AG04450 (cell line): ENCODE measurements at regions of chr1 and their contacts with region 1.

Region 1: GRCh38 chr1:85276215-85276977 is at the start of gene BCL10:
- DNase-seq: peak; percentile 94
- H3K4me3 ChIP-seq: peak within 1 kb of the TSS; percentile 98
- H3K27ac ChIP-seq: peak within 1 kb of the TSS; percentile 92
- H3K27me3 ChIP-seq: no peaks in the 10 kb centered on the region
- CTCF ChIP-seq: no peak
- polyA plus RNA-seq, gene BCL10: 17.2 and 19.4 TPM in 2 replicates

Region 2: DNA sequence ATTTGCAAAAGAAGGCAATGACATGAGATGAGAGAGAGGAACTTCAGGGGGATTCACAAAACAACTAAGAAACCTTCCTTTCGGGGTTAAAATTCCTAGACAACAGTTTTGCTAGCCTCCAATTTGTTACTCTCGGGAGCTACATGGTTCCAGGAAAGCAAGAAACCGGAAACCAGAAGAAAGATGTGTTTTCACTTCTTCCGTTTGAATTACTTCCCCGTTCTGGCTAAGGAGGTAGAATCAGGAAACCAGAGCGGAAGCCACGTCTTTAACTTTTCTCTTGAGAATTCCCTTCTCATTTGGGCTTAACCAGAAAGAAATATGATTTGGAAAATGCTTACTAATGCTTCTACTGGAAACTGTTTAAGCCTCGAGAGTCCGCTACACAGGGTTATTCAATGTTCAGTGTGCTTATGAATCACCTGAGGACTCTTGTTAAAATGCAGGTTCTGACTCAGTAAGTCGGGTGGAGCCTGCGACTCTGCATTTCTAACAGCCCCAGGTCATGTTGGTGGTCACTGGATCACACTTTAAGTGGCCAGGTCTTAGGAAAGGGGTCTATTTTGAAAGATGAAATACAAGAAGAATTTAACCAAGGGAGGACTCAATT is 184.6 kb before region 1 on chr1:
- CTCF ChIA-PET with region 1: no interaction called
- POLR2A ChIA-PET with region 1: no interaction called
- DNase-seq: no peak
- H3K4me3 ChIP-seq: no peak overlapping the region
- H3K27ac ChIP-seq: no peak overlapping the region
- H3K27me3 ChIP-seq: peaks cover 2% of the 10 kb centered on the region
- CTCF ChIP-seq: no peak

Region 3: DNA sequence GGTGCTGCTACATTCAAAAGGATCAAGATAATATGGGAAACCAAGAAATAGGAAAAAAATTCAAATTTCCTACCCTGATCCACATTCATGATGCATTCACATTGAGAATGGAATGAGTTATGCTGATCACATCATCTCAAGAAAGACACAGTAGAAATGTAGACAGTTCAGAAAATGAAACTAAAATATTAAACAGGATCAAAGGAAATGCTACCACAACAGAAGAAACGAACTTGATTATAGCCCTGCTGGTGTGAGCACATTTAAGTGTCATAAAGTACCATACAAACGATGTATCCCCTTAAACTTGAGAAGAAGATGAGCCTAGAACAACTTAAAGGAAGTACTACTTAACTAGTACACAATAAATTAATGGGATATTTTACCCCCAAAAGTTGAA is 96.9 kb before region 1 on chr1:
- CTCF ChIA-PET with region 1: no interaction called
- POLR2A ChIA-PET with region 1: no interaction called
- DNase-seq: no peak
- H3K4me3 ChIP-seq: no peak overlapping the region
- H3K27ac ChIP-seq: no peak overlapping the region
- H3K27me3 ChIP-seq: no peaks in the 10 kb centered on the region
- CTCF ChIP-seq: no peak

Region 4: DNA sequence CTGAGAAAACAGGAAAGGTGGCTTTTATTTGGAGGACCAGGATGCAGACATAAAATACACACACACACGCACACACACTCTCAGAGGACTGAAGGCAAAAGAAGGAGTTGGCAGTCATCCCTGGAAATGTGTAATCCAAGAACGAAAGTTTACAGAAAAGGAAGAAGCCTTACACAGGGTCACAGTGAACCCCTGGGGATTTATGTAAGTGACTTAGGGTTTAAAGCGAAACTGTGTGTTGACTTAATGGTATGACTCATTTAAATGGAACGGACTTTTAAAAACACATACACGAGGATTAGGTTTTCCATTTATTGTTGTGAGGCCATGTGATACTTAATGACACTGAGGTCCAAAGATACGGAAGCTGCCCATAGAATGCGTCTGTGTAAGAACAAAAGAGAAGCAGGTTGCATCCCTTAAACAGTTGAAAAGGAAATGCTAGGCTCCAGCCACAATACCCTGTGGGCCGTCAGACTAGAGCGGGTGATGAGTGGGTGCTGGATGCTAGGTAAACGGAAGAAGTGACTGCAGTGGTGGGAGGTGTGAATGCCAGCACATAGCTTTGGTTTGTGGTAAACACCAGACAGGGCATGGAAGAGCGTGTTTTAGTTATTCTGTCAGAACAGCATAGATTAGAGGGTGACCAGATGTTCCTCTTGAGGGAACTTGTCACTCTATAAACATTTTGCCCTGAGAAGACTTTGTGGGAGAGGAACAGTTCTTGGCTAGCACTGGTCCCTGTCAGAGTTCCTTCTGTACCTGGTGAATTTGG is 21.6 kb after region 1 on chr1:
- CTCF ChIA-PET with region 1: no interaction called
- POLR2A ChIA-PET with region 1: interaction called, 11 read pairs
- DNase-seq: peak; percentile 98
- H3K4me3 ChIP-seq: peak overlapping the region; percentile 20; the same call in 1 of the 2 replicates
- H3K27ac ChIP-seq: peak overlapping the region; percentile 94
- H3K27me3 ChIP-seq: no peaks in the 10 kb centered on the region
- CTCF ChIP-seq: no peak